GM12878 (cell line): ENCODE measurements at regions of chr10 and their contacts with region 1.

Region 1: GRCh38 chr10:58998924-58999713 is 177.3 kb upstream of the PHYHIPL start:
- DNase-seq: no peak
- ATAC-seq: no peak
- H3K4me3 ChIP-seq: no peak overlapping the region
- H3K27ac ChIP-seq: no peak overlapping the region
- H3K4me1 ChIP-seq: peaks cover 36% of the 10 kb centered on the region
- H3K27me3 ChIP-seq: no peaks in the 10 kb centered on the region
- CTCF ChIP-seq: no peak
- EP300 ChIP-seq: no peak
- POLR2A ChIP-seq: no peak
- RAD21 ChIP-seq: no peak

Region 2: DNA sequence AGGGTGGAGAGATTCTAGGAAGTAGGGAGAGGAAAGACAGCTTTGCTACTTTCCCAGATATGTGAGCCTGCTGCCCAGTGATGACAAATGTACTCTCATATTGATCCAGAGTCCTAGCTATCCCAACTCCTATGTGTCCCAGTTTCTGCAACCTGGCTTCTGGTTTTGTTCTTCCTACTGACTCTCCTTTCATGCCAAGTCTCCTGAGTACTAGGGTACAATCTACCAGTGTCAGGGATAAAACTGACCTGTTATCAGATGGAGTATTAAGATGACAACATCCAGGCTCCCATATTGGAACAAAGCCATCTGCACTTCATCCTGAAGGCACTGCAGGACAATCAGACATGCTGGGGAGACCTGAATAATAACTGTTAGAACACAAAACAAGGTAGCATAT is 56.4 kb before region 1 on chr10:
- CTCF ChIA-PET with region 1: no interaction called
- POLR2A ChIA-PET with region 1: no interaction called
- RAD21 ChIA-PET with region 1: no interaction called
- SMC1A ChIA-PET with region 1: no interaction called
- in situ Hi-C with region 1: no loop called
- intact Hi-C with region 1: no loop called
- DNase-seq: no peak
- ATAC-seq: no peak
- H3K4me3 ChIP-seq: no peak overlapping the region
- H3K27ac ChIP-seq: no peak overlapping the region
- H3K4me1 ChIP-seq: no peaks in the 10 kb centered on the region
- H3K27me3 ChIP-seq: 0 out of 4 replicates have a peak, but pooled peaks cover 0 to 1% of the 10 kb centered on the region in 2 experiments
- CTCF ChIP-seq: no peak
- EP300 ChIP-seq: no peak
- POLR2A ChIP-seq: no peak
- RAD21 ChIP-seq: no peak

Region 3: DNA sequence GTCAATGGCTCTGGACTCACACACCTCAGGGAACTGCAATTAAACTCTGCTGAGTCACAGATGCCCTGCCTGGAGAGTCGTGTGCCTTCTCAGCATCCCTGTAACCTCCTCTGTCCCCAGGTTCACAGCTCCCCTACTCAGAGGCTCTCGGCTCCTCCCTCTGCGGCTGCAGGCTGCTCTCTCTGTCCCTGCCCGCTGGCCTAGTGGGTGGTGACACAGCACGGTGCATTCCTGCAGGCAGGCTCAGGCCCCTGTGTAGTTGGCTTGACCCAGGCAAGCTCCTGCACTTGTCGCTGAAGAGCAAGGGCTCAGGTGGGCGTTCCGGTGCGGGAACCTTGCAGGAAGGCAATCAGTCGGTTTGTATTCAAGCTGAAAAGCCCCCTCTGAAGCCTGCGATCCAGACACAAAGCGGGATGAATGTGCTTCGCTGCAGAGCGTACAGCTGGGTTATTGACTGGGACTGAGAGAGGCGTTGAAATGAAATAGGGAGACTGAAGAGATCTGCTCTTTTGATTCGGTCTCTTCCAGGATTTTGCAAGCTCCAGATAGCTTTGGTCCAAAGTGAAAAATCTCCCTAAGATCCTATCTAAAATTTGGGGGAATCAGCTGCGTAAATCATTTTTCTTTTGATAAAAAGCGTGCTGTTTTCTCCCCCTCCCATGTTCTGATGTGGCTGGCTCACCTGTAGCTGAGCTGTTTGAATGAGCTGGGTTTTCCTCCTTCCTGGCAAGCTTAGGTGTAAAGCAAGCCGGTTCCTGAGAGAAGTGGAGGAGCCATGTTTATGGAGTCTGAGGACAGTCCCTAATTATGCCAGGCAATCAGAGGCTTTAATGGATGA is 31.3 kb before region 1 on chr10:
- CTCF ChIA-PET with region 1: interaction called, 3 read pairs
- POLR2A ChIA-PET with region 1: interaction called, 9 read pairs
- RAD21 ChIA-PET with region 1: interaction called, 13 read pairs
- SMC1A ChIA-PET with region 1: interaction called, 15 read pairs
- in situ Hi-C with region 1: no loop called
- intact Hi-C with region 1: no loop called
- DNase-seq: no peak
- ATAC-seq: peak; percentile 88
- H3K4me3 ChIP-seq: no peak overlapping the region
- H3K27ac ChIP-seq: no peak overlapping the region
- H3K4me1 ChIP-seq: no peaks in the 10 kb centered on the region
- H3K27me3 ChIP-seq: no peaks in the 10 kb centered on the region
- CTCF ChIP-seq: no peak
- EP300 ChIP-seq: no peak
- POLR2A ChIP-seq: no peak
- RAD21 ChIP-seq: no peak

Region 4: DNA sequence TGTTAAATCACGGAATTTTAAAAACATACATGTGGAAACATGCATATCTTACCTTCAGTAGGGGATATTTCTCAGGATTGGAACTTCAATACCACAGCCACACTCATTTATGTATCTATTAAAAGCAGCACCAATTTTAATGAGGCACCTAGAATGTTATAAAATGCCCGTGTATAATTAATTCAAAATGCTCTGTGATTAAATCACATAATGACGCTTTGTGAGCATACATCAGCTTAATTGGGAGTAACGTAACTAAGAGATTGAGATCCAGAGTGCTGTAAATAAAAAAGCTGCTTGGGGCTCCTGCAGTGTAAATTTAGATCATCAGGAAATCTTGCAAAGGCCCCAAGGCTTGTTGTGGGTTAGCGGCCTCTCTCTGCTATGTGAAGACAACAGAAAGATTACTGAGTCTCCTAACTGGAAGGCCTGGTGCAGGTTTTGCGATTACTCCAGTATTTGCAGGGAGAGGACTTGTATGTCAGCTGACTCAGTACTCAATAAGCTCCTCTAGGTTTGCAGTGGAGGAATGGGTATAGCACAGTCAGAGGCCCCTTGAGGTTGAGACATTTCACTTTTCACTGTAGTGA is 18.2 kb before region 1 on chr10:
- CTCF ChIA-PET with region 1: interaction called, 21 read pairs
- POLR2A ChIA-PET with region 1: interaction called, 4 read pairs
- RAD21 ChIA-PET with region 1: interaction called, 69 read pairs
- SMC1A ChIA-PET with region 1: interaction called, 25 read pairs
- in situ Hi-C with region 1: no loop called
- intact Hi-C with region 1: no loop called
- DNase-seq: no peak
- ATAC-seq: peak; percentile 45; the same call in 2 of the 3 replicates
- H3K4me3 ChIP-seq: no peak overlapping the region
- H3K27ac ChIP-seq: no peak overlapping the region
- H3K4me1 ChIP-seq: no peaks in the 10 kb centered on the region
- H3K27me3 ChIP-seq: no peaks in the 10 kb centered on the region
- CTCF ChIP-seq: no peak
- EP300 ChIP-seq: no peak
- POLR2A ChIP-seq: no peak
- RAD21 ChIP-seq: no peak

Region 5: GRCh38 chr10:59012839-59013238 is 13.7 kb after region 1 on chr10:
- CTCF ChIA-PET with region 1: interaction called, 20 read pairs
- POLR2A ChIA-PET with region 1: interaction called, 10 read pairs
- RAD21 ChIA-PET with region 1: interaction called, 223 read pairs
- SMC1A ChIA-PET with region 1: interaction called, 222 read pairs
- in situ Hi-C with region 1: no loop called
- intact Hi-C with region 1: no loop called
- DNase-seq: no peak
- ATAC-seq: peak; percentile 79
- H3K4me3 ChIP-seq: no peak overlapping the region
- H3K27ac ChIP-seq: no peak overlapping the region
- H3K4me1 ChIP-seq: no peaks in the 10 kb centered on the region; the same call in 1 of the 2 replicates
- H3K27me3 ChIP-seq: no peaks in the 10 kb centered on the region
- CTCF ChIP-seq: no peak
- EP300 ChIP-seq: 0 out of 4 replicates have a peak, but pooled peaks of 1 of the 2 experiments have one; percentile 10
- POLR2A ChIP-seq: no peak
- RAD21 ChIP-seq: no peak